H1 (cell line): ENCODE measurements at regions of chr9 and their contacts with region 1.

Region 1: GRCh38 chr9:137605121-137606004 is at the start of gene ARRDC1:
- DNase-seq: peak; percentile 86 to 90
- H3K4me3 ChIP-seq: peak within 1 kb of the TSS; percentile 74 to 85 (median 84)
- H3K27ac ChIP-seq: no peak within 1 kb of the TSS; the same call in 1 of the 2 replicates
- H3K4me1 ChIP-seq: peaks cover 0 to 17% (median 8%) of the 10 kb centered on the region in 4 experiments; a peak in 6 of 7 replicates
- H3K27me3 ChIP-seq: peaks cover 0 to 9% (median 2%) of the 10 kb centered on the region in 4 experiments; a peak in 2 of 7 replicates
- CTCF ChIP-seq: no peak
- EP300 ChIP-seq: no peak
- POLR2A ChIP-seq: peak in 1 of 2 experiments; percentile 51; a peak in 2 of 3 replicates
- RAD21 ChIP-seq: no peak
- total RNA-seq, gene ARRDC1: 22.0 and 22.2 TPM in 2 replicates

Region 2: DNA sequence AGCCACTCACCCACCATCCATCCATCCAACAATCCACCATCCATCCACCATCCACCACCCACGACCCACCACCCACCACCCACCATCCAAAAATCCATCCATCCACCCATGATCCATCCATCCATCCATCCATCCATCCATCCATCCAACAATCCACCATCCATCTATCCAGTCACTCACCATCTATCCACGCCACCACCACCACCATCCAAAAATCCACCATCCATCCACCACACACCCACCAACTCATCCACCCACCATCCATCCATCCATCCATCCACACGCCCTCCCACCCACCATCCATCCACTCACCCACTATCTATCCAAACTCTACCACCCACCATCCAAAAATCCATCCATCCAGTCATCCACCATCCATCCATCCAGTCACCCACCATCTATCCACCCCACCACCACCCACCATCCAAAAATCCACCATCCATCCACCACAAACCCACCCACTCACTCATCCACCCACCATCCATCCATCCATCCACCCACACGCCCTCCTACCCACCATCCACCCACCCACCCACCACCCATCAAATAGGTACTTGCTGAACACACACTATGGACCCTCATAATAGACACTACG is 35.7 kb before region 1 on chr9:
- CTCF ChIA-PET with region 1: no interaction called
- POLR2A ChIA-PET with region 1: no interaction called
- DNase-seq: no peak
- H3K4me3 ChIP-seq: no peak overlapping the region
- H3K27ac ChIP-seq: no peak overlapping the region
- H3K4me1 ChIP-seq: no peaks in the 10 kb centered on the region
- H3K27me3 ChIP-seq: no peaks in the 10 kb centered on the region
- CTCF ChIP-seq: no peak
- EP300 ChIP-seq: no peak
- POLR2A ChIP-seq: no peak
- RAD21 ChIP-seq: no peak

Region 3: GRCh38 chr9:137590462-137591383 is 14.6 kb before region 1 on chr9 and contains the start of gene ZMYND19:
- CTCF ChIA-PET with region 1: interaction called, 12 read pairs
- POLR2A ChIA-PET with region 1: interaction called, 13 read pairs
- DNase-seq: peak in 1 of 2 experiments; percentile 94
- H3K4me3 ChIP-seq: peak within 1 kb of the TSS; percentile 82 to 96 (median 86)
- H3K27ac ChIP-seq: peak within 1 kb of the TSS; percentile 45; the same call in 1 of the 2 replicates
- H3K4me1 ChIP-seq: peaks cover 0 to 7% (median 5%) of the 10 kb centered on the region in 4 experiments; a peak in 5 of 7 replicates
- H3K27me3 ChIP-seq: no peaks in the 10 kb centered on the region; a peak in 1 of 7 replicates
- CTCF ChIP-seq: no peak
- EP300 ChIP-seq: no peak
- POLR2A ChIP-seq: peak in 1 of 2 experiments; percentile 56; a peak in 2 of 3 replicates
- RAD21 ChIP-seq: no peak
- total RNA-seq, gene ZMYND19: 58.5 and 58.7 TPM in 2 replicates

Region 4: DNA sequence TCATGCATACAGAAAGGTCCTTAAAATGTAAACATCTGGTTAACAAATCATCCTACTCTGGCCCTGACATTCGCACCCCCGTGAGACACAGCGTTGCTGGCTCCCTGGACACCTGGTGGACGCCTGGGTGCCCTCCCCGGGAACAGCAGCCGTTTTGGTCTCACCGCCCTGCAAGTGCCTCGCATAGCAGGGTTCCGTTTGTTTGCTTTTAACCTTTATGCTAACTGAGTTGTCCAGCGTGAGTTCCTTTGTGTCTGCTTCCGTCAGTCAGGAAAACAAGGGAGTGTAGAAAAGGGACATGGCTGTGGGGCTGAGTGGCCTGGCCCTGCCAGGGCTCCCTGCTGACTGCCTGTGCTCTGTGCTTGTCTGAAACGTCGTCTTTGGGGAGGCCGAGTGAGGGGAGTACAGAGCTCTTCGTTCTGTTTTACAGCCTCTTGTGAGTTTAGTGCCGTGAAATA is 180.4 kb after region 1 on chr9:
- CTCF ChIA-PET with region 1: no interaction called
- POLR2A ChIA-PET with region 1: no interaction called
- DNase-seq: no peak
- H3K4me3 ChIP-seq: no peak overlapping the region
- H3K27ac ChIP-seq: no peak overlapping the region
- H3K4me1 ChIP-seq: peaks cover 4 to 13% (median 8%) of the 10 kb centered on the region in 4 experiments; a peak in 5 of 7 replicates
- H3K27me3 ChIP-seq: no peaks in the 10 kb centered on the region
- CTCF ChIP-seq: no peak
- EP300 ChIP-seq: no peak
- POLR2A ChIP-seq: no peak
- RAD21 ChIP-seq: no peak